Activated CD4-positive, alpha-beta T cell treated with anti-CD3 and anti-CD28 coated beads for 36 hours (primary cell): ENCODE measurements at regions of chr4 and their contacts with region 1.

Region 1: DNA sequence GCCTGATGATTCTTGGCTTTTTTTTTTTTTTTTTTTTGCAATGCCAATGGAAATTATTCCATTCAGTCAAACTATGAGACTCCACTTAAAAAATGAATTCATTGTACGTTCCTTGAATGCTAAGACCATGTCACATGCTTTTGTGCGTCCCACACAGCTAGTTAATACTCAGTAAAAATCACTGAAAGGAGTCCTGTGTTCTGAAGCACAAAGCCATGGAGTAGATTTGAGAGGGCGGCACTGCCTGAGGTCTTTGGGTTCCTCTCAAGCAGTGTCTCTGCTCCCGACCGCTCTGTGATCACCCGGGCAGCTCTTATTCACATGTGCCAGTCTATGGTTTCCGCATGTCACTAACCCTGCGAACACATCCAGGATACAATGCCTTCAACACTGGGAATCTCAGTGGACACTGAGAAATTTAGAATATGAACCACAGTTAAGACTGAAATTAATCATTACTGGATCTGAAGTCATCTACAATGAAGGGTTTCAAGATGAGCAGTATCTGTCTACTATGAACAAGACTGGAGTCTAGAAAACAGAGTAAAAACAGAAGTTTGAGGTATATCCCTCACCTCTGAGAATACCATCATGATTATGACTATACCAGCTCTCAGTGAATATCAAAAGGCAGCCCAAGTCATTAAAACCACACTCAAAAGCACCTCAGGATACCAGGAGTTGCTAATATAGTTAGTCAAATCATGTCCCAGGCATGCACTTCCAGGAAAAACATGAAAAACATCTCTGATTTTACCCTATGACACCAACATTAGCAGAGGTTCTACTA is 193.0 kb downstream of the MGST2 start:
- DNase-seq: peak; percentile 55
- ATAC-seq: peak; percentile 94
- H3K4me3 Mint-ChIP-seq: no peak overlapping the region
- H3K27ac Mint-ChIP-seq: no peak overlapping the region
- H3K4me1 Mint-ChIP-seq: peaks cover 32% of the 10 kb centered on the region
- H3K27me3 Mint-ChIP-seq: peaks cover 33% of the 10 kb centered on the region

Region 2: GRCh38 chr4:139887962-139888735 is 29.5 kb after region 1 on chr4:
- CTCF ChIA-PET with region 1: no interaction called
- POLR2A ChIA-PET with region 1: no interaction called
- intact Hi-C with region 1: no loop called
- DNase-seq: no peak
- ATAC-seq: no peak
- H3K4me3 Mint-ChIP-seq: no peak overlapping the region
- H3K27ac Mint-ChIP-seq: no peak overlapping the region
- H3K4me1 Mint-ChIP-seq: peaks cover 5% of the 10 kb centered on the region
- H3K27me3 Mint-ChIP-seq: peaks cover 1% of the 10 kb centered on the region

Region 3: DNA sequence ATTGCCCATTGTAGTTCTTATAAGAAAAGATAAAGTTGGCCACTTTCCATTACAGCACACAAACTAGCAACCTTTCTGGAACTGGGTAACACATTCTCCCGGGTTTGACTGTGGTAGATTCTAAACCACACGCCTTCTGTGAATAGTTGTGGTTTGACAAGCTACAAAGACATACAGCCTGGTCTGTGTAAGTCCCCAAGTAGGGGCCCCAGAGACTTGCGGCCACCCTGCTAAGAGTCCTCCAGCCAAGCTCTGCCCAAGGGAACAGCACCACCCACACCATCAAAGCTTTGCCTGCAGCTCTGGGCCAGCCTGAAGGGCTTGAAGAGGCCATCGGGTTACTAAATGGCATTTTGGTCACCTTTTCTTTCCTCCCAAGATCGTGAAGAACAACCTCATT is 91.9 kb after region 1 on chr4:
- CTCF ChIA-PET with region 1: no interaction called
- POLR2A ChIA-PET with region 1: no interaction called
- intact Hi-C with region 1: loop called (anchors 1 kb)
- DNase-seq: peak; percentile 69
- ATAC-seq: peak; percentile 83
- H3K4me3 Mint-ChIP-seq: peak overlapping the region; percentile 2
- H3K27ac Mint-ChIP-seq: peak overlapping the region; percentile 80
- H3K4me1 Mint-ChIP-seq: peaks cover 25% of the 10 kb centered on the region
- H3K27me3 Mint-ChIP-seq: peaks cover 2% of the 10 kb centered on the region

Region 4: DNA sequence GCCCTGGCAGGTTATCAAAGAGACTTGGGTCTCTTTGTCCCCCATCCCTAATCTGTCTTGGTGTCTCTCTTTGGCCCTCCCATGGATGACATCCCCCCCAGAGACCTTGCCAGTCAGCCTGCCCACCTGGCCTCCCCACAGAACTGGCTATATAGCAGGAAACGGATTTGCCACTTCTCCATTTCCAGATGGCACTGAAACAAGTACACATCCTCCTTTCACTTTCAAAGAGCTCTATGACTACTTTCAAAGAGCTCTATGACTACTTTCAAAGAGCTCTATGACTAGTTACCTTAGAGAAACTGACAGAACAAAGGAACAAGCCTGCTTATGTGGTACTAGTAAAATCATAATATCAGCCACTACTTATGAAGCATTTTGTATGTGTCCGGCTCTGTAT is 120.1 kb after region 1 on chr4:
- CTCF ChIA-PET with region 1: interaction called, 3 read pairs
- POLR2A ChIA-PET with region 1: no interaction called
- intact Hi-C with region 1: loop called (anchors 2 kb)
- DNase-seq: peak; percentile 34
- ATAC-seq: peak; percentile 97
- H3K4me3 Mint-ChIP-seq: no peak overlapping the region
- H3K27ac Mint-ChIP-seq: peak overlapping the region; percentile 58
- H3K4me1 Mint-ChIP-seq: peaks cover 28% of the 10 kb centered on the region
- H3K27me3 Mint-ChIP-seq: no peaks in the 10 kb centered on the region

Region 5: GRCh38 chr4:140049024-140049848 is 190.6 kb after region 1 on chr4:
- CTCF ChIA-PET with region 1: no interaction called
- POLR2A ChIA-PET with region 1: no interaction called
- intact Hi-C with region 1: loop called in 1 of 2 experiments (anchors 2 kb)
- DNase-seq: peak; percentile 71
- ATAC-seq: peak; percentile 91
- H3K4me3 Mint-ChIP-seq: peak overlapping the region; percentile 73
- H3K27ac Mint-ChIP-seq: peak overlapping the region; percentile 87
- H3K4me1 Mint-ChIP-seq: peaks cover 45% of the 10 kb centered on the region
- H3K27me3 Mint-ChIP-seq: peaks cover 8% of the 10 kb centered on the region

Region 6: GRCh38 chr4:140095694-140096482 is 237.3 kb after region 1 on chr4:
- CTCF ChIA-PET with region 1: no interaction called
- POLR2A ChIA-PET with region 1: interaction called, 7 read pairs
- intact Hi-C with region 1: loop called in 1 of 2 experiments (anchors 1 kb)
- DNase-seq: peak; percentile 81
- ATAC-seq: peak; percentile 83
- H3K4me3 Mint-ChIP-seq: peak overlapping the region; percentile 75
- H3K27ac Mint-ChIP-seq: peak overlapping the region; percentile 99
- H3K4me1 Mint-ChIP-seq: peaks cover 93% of the 10 kb centered on the region
- H3K27me3 Mint-ChIP-seq: no peaks in the 10 kb centered on the region

Region 7: DNA sequence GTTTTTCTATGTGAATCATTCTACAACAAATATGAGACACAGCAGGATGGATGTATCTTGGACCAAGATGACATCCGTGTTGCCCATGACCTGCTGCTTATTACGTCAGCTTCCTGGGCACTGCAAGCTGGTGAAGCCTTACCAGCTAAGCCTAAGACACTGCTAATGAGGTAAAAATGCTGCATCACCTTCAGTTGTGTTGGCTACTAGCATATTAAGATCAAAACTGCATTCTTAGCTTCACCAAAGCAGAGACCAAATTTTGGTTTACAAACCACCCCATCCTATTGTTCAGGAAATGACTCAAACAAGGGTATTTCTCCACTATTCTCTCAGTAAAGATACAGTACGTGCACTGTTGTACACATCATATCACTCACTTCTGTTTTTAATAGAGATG is 245.0 kb after region 1 on chr4:
- CTCF ChIA-PET with region 1: no interaction called
- POLR2A ChIA-PET with region 1: no interaction called
- intact Hi-C with region 1: loop called in 1 of 2 experiments (anchors 2 kb)
- DNase-seq: peak; percentile 75
- ATAC-seq: peak; percentile 91
- H3K4me3 Mint-ChIP-seq: no peak overlapping the region
- H3K27ac Mint-ChIP-seq: peak overlapping the region; percentile 72
- H3K4me1 Mint-ChIP-seq: peaks cover 52% of the 10 kb centered on the region
- H3K27me3 Mint-ChIP-seq: peaks cover 8% of the 10 kb centered on the region